HepG2 (cell line): ENCODE measurements at regions of chr6 and their contacts with region 1.

Region 1: GRCh38 chr6:151390276-151391032 is 905 bp downstream of the ZBTB2 start:
- DNase-seq: peak; percentile 99
- ATAC-seq: peak; percentile 85
- H3K4me3 ChIP-seq: peak overlapping the region; percentile 91 to 98 (median 94); a peak in 4 of 6 replicates
- H3K27ac ChIP-seq: peak overlapping the region; percentile 99
- H3K4me1 ChIP-seq: peaks cover 50% of the 10 kb centered on the region
- H3K27me3 ChIP-seq: no peaks in the 10 kb centered on the region; a peak in 1 of 5 replicates
- CTCF ChIP-seq: 0 out of 2 replicates have a peak, but pooled peaks have one; percentile 29
- EP300 ChIP-seq: no peak; a peak in 1 of 4 replicates
- POLR2A ChIP-seq: peak; percentile 77 to 83
- RAD21 ChIP-seq: no peak

Region 2: DNA sequence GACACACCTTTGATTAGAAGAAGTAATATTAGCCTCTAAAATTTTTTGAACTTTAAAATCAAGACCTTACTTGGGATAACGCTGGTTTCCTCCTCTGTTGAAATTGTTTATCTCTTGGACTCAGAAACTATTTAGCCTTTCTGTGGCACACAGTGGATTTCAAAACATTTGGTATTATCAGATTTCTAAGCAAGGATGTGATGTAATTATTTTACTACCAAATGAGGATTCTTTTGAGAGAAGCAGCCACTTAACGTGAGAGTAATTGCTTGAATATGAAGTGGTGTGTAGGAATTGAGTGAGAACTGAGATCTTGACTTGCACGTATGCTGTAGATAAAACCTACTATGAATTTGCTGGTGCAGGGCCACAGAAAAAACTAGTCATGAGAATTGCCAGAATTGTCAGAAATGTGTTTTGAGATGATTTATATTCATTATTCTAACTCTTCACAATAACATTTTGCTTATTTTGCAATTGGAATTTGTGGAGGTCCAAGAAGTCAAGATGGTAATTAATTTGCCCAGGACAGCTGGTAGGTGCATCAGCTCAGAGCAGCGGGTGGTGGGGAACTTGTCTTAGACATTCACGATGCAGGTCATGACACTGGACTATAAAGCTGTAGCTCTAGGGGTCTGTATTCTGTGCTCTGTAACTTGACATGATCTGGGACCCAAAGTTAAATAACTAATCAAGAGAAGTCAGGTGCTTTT is 97.3 kb before region 1 on chr6:
- CTCF ChIA-PET with region 1: no interaction called
- POLR2A ChIA-PET with region 1: no interaction called
- in situ Hi-C with region 1: no loop called
- intact Hi-C with region 1: no loop called
- DNase-seq: no peak
- ATAC-seq: no peak
- H3K4me3 ChIP-seq: no peak overlapping the region
- H3K27ac ChIP-seq: no peak overlapping the region
- H3K4me1 ChIP-seq: no peaks in the 10 kb centered on the region
- H3K27me3 ChIP-seq: no peaks in the 10 kb centered on the region; a peak in 2 of 5 replicates
- CTCF ChIP-seq: no peak
- EP300 ChIP-seq: no peak
- POLR2A ChIP-seq: no peak
- RAD21 ChIP-seq: no peak

Region 3: DNA sequence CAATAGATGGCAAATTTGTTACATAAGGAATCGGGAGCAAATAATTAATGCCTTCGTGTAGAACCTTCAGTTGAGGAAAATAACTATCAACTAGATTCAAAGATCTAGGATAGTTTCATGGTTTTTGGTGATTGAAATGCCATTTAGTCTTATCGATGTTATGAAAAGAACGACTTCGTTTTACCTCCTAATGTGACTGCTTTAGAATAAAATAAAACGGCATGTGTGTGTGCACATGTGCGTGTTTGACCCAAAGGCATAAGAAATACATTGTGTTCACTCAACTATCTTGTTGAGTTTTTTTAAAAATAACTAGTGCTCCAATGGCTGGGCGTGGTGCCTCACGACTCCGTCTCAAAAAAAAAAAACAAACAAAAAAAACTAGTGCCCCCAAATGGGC is 36.7 kb before region 1 on chr6:
- CTCF ChIA-PET with region 1: no interaction called
- POLR2A ChIA-PET with region 1: interaction called, 3 read pairs
- in situ Hi-C with region 1: no loop called
- intact Hi-C with region 1: loop called (anchors 1 kb)
- DNase-seq: no peak
- ATAC-seq: no peak
- H3K4me3 ChIP-seq: no peak overlapping the region
- H3K27ac ChIP-seq: no peak overlapping the region
- H3K4me1 ChIP-seq: no peaks in the 10 kb centered on the region
- H3K27me3 ChIP-seq: no peaks in the 10 kb centered on the region
- CTCF ChIP-seq: no peak
- EP300 ChIP-seq: no peak
- POLR2A ChIP-seq: no peak
- RAD21 ChIP-seq: no peak

Region 4: DNA sequence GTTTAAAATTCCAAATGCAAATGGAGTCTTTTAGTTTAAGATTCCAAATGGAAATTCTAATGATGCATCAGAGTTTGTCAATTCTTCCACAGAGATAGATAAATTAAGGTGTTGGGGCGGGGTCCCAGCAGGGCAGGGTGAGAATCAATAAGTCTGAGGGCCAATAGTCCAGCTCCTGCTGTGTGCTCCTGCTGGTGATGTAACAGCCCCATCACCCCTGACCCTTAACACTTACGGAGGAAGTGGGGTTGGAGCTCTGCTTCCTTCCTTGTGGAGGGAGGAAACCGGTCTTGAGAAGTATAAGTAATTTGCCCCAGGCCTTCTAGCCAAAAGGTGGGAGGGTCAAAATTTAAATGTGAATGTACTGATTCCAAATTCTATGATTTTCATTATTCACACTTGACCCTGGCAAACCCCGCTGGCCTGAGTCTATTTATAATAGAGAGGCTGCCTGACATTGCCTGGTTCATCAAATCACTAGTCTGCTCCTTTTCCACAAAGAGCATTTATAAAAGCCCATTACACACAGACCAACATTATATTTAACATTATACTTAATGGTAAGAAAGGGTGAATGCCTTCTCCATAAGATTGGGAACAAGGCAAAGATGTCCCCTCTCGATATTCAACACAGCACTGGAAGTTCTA is 16.3 kb before region 1 on chr6:
- CTCF ChIA-PET with region 1: no interaction called
- POLR2A ChIA-PET with region 1: interaction called, 10 read pairs
- in situ Hi-C with region 1: no loop called
- intact Hi-C with region 1: no loop called
- DNase-seq: peak; percentile 31
- ATAC-seq: peak; percentile 61
- H3K4me3 ChIP-seq: no peak overlapping the region
- H3K27ac ChIP-seq: no peak overlapping the region
- H3K4me1 ChIP-seq: peaks cover 30% of the 10 kb centered on the region
- H3K27me3 ChIP-seq: no peaks in the 10 kb centered on the region
- CTCF ChIP-seq: no peak
- EP300 ChIP-seq: 0 out of 4 replicates have a peak, but pooled peaks of 1 of the 2 experiments have one; percentile 15
- POLR2A ChIP-seq: no peak
- RAD21 ChIP-seq: no peak

Region 5: DNA sequence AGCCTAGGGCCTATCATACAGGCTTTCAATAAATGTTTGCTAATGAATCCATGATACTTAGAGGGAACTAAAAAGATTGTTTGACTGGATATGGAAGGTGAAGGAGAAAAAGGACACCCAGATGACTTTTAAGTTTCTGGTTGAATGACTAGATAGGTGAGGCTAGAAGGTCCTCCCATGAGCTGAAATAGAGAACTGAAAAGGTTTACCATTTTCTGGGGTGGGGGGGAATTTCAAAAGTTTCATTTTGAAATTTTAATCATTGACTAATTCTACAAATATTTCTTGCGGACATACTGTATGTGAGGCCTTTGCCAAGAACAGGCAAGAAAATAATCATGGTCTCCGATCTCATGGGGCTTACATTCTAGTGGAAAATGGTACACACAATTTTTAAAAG is 18.8 kb after region 1 on chr6:
- CTCF ChIA-PET with region 1: no interaction called
- POLR2A ChIA-PET with region 1: interaction called, 6 read pairs
- in situ Hi-C with region 1: no loop called
- intact Hi-C with region 1: loop called (anchors 2 kb)
- DNase-seq: no peak
- ATAC-seq: no peak
- H3K4me3 ChIP-seq: no peak overlapping the region
- H3K27ac ChIP-seq: no peak overlapping the region
- H3K4me1 ChIP-seq: no peaks in the 10 kb centered on the region
- H3K27me3 ChIP-seq: no peaks in the 10 kb centered on the region
- CTCF ChIP-seq: no peak
- EP300 ChIP-seq: no peak
- POLR2A ChIP-seq: no peak
- RAD21 ChIP-seq: no peak

Region 6: DNA sequence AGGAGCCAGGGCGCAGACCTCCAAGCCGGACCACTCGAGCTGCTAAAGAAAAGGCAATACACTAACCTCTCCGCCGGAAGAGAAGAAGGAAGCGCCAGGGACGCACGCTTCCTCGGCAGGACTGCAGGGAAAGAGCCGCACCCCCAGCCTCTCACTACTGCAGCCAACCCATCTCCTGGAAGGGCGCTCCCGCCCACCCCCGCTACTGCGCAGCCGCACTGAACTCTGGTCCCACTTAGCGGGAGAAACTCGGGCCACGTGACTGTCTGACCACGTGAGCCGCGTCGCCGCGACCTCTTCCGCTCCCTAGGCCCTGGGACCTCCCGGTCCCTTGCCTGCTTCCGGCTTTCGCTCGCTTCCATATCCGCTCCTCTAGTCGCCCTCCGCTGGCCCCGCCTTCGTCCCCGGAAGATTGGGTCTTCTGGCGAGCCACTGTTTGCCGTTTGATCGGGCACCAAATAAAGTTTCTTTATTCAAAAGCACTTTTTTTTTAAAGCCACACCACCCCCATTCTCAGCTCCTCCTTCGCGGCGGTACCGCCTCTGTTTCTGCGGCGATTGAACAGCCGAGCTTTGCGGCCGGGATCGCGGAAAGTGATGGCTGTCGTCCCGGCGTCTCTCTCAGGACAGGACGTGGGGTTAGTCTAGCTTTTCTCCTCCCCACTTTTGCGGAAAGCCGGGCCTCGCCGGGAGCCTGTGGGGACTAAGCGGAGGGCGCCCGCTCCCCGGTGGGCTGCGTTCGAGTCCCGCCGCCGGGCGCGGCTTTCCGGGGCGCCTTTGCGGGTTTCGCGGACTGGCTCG is 61.7 kb after region 1 on chr6 and contains the start of gene RMND1:
- CTCF ChIA-PET with region 1: no interaction called
- POLR2A ChIA-PET with region 1: interaction called, 22 read pairs
- in situ Hi-C with region 1: no loop called
- intact Hi-C with region 1: loop called (anchors 2 kb)
- DNase-seq: peak; percentile 100
- ATAC-seq: peak; percentile 96
- H3K4me3 ChIP-seq: peak within 1 kb of the TSS; percentile 81 to 90 (median 88)
- H3K27ac ChIP-seq: peak within 1 kb of the TSS; percentile 94
- H3K4me1 ChIP-seq: peaks cover 60% of the 10 kb centered on the region
- H3K27me3 ChIP-seq: peaks cover 0 to 2% of the 10 kb centered on the region in 2 experiments; a peak in 1 of 5 replicates
- CTCF ChIP-seq: peak; percentile 22
- EP300 ChIP-seq: peak; percentile 58 to 83; a peak in 3 of 4 replicates
- POLR2A ChIP-seq: peak; percentile 96 to 97
- RAD21 ChIP-seq: peak; percentile 21; the same call in 1 of the 2 replicates
- total RNA-seq, gene RMND1: 72.5 and 75.6 TPM in 2 replicates

Region 7: DNA sequence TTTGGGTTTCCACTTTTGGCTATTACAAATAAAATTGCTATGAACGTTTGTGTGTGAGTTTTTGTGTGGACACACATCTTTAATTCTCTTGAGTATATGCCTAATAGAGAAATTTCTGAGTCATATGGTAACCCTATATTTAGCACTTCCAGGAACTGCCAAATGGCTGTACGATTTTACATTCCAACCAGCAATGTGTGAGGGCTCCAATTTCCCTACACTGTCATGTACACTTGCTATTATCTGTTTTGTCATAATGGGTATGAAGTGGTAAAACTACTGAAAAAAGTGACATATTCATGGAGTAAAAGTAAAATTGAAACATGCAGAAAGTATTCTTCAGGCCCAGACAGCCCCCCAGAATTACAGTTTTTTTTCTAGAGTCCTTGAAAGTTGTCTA is 357.4 kb after region 1 on chr6:
- CTCF ChIA-PET with region 1: no interaction called
- POLR2A ChIA-PET with region 1: no interaction called
- in situ Hi-C with region 1: no loop called
- intact Hi-C with region 1: no loop called
- DNase-seq: no peak
- ATAC-seq: no peak
- H3K4me3 ChIP-seq: no peak overlapping the region
- H3K27ac ChIP-seq: no peak overlapping the region
- H3K4me1 ChIP-seq: no peaks in the 10 kb centered on the region
- H3K27me3 ChIP-seq: peaks cover 0 to 5% of the 10 kb centered on the region in 2 experiments; a peak in 1 of 5 replicates
- CTCF ChIP-seq: no peak
- EP300 ChIP-seq: no peak
- POLR2A ChIP-seq: no peak
- RAD21 ChIP-seq: no peak

Region 8: GRCh38 chr6:152982768-152983636 is 1592.5 kb after region 1 on chr6 and contains the start of gene FBXO5:
- CTCF ChIA-PET with region 1: no interaction called
- POLR2A ChIA-PET with region 1: no interaction called
- in situ Hi-C with region 1: no loop called
- intact Hi-C with region 1: loop called (anchors 10 kb)
- DNase-seq: peak; percentile 96
- ATAC-seq: peak; percentile 93
- H3K4me3 ChIP-seq: peak within 1 kb of the TSS; percentile 74 to 100 (median 97)
- H3K27ac ChIP-seq: peak within 1 kb of the TSS; percentile 92
- H3K4me1 ChIP-seq: peaks cover 55% of the 10 kb centered on the region
- H3K27me3 ChIP-seq: no peaks in the 10 kb centered on the region; a peak in 1 of 5 replicates
- CTCF ChIP-seq: no peak
- EP300 ChIP-seq: 0 out of 4 replicates have a peak, but pooled peaks of 1 of the 2 experiments have one; percentile 36
- POLR2A ChIP-seq: peak; percentile 80 to 87
- RAD21 ChIP-seq: peak; percentile 11; the same call in 1 of the 2 replicates
- total RNA-seq, gene FBXO5: 41.5 and 53.4 TPM in 2 replicates